Vagina (tissue), 2 donors: ENCODE measurements at regions of chr16 and their contacts with region 1.

Region 1: GRCh38 chr16:14579266-14579665 is 50.8 kb downstream of the PARN start:
- DNase-seq: no peak
- H3K4me3 ChIP-seq: no peak overlapping the region
- H3K27ac ChIP-seq: no peak overlapping the region
- H3K4me1 ChIP-seq: no peaks in the 10 kb centered on the region
- H3K27me3 ChIP-seq: no peaks in the 10 kb centered on the region
- CTCF ChIP-seq: no peak
- POLR2A ChIP-seq: no peak

Region 2: GRCh38 chr16:14263769-14264168 is 315.5 kb before region 1 on chr16:
- intact Hi-C with region 1: no loop called
- DNase-seq: no peak
- H3K4me3 ChIP-seq: no peak overlapping the region
- H3K27ac ChIP-seq: no peak overlapping the region
- H3K4me1 ChIP-seq: no peaks in the 10 kb centered on the region
- H3K27me3 ChIP-seq: no peaks in the 10 kb centered on the region
- CTCF ChIP-seq: no peak
- POLR2A ChIP-seq: no peak

Region 3: DNA sequence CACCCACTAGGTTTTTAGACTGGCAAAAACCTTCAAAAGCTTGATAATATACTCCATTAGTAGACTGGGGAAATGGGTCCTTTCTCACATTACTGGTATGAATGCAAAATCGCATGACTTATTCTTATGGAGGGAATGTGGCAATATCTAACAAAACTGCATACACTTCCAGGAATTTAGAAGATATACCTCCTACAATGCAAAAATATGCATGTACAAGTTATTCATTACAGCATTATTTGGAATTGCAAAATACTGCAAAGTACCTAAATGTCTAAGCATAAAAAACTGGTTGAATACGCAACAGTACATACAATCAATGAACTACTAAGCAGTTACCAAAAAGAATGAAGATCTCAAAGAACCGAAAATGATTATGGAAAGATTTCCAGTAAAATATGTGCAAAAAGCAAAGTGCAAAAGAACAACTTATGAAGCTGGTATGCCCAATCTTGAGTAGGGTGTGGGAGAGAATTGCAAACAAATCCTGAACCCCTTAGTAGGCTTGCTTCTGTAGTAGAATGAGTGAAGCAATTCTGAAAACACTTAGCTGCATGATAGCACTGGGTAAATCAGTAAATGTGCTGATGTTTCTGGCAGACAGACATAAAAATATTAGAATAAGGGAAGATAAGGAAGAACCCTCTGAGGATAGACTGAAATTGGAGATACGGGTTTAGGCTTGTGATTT is 129.3 kb before region 1 on chr16:
- intact Hi-C with region 1: no loop called
- DNase-seq: no peak
- H3K4me3 ChIP-seq: no peak overlapping the region
- H3K27ac ChIP-seq: no peak overlapping the region
- H3K4me1 ChIP-seq: peaks cover 10% of the 10 kb centered on the region
- H3K27me3 ChIP-seq: no peaks in the 10 kb centered on the region
- CTCF ChIP-seq: no peak
- POLR2A ChIP-seq: no peak

Region 4: GRCh38 chr16:14462811-14463210 is 116.5 kb before region 1 on chr16:
- intact Hi-C with region 1: no loop called
- DNase-seq: no peak
- H3K4me3 ChIP-seq: no peak overlapping the region
- H3K27ac ChIP-seq: no peak overlapping the region
- H3K4me1 ChIP-seq: no peaks in the 10 kb centered on the region
- H3K27me3 ChIP-seq: no peaks in the 10 kb centered on the region
- CTCF ChIP-seq: no peak
- POLR2A ChIP-seq: no peak

Region 5: GRCh38 chr16:14548933-14549788 is 30.1 kb before region 1 on chr16:
- intact Hi-C with region 1: loop called (anchors 1 kb)
- DNase-seq: no peak
- H3K4me3 ChIP-seq: no peak overlapping the region
- H3K27ac ChIP-seq: no peak overlapping the region
- H3K4me1 ChIP-seq: no peaks in the 10 kb centered on the region
- H3K27me3 ChIP-seq: no peaks in the 10 kb centered on the region
- CTCF ChIP-seq: no peak
- POLR2A ChIP-seq: no peak